A549 (cell line): ENCODE measurements at regions of chr13 and their contacts with region 1.

Region 1: GRCh38 chr13:32914686-32915085 is 101.5 kb upstream of the KL start:
- DNase-seq: no peak
- ATAC-seq: no peak
- H3K4me3 ChIP-seq: no peak overlapping the region
- H3K27ac ChIP-seq: no peak overlapping the region
- H3K4me1 ChIP-seq: no peaks in the 10 kb centered on the region
- CTCF ChIP-seq: no peak
- EP300 ChIP-seq: no peak
- POLR2A ChIP-seq: no peak
- RAD21 ChIP-seq: no peak

Region 2: GRCh38 chr13:32902029-32902780 is 12.5 kb before region 1 on chr13:
- CTCF ChIA-PET with region 1: interaction called, 3 read pairs
- POLR2A ChIA-PET with region 1: interaction called, 10 read pairs
- DNase-seq: no peak
- ATAC-seq: no peak
- H3K4me3 ChIP-seq: no peak overlapping the region
- H3K27ac ChIP-seq: no peak overlapping the region
- H3K4me1 ChIP-seq: no peaks in the 10 kb centered on the region
- CTCF ChIP-seq: no peak
- EP300 ChIP-seq: no peak
- POLR2A ChIP-seq: no peak
- RAD21 ChIP-seq: no peak